ENCODE measurements at regions of chr6 and their contacts with region 1.

Region 1: DNA sequence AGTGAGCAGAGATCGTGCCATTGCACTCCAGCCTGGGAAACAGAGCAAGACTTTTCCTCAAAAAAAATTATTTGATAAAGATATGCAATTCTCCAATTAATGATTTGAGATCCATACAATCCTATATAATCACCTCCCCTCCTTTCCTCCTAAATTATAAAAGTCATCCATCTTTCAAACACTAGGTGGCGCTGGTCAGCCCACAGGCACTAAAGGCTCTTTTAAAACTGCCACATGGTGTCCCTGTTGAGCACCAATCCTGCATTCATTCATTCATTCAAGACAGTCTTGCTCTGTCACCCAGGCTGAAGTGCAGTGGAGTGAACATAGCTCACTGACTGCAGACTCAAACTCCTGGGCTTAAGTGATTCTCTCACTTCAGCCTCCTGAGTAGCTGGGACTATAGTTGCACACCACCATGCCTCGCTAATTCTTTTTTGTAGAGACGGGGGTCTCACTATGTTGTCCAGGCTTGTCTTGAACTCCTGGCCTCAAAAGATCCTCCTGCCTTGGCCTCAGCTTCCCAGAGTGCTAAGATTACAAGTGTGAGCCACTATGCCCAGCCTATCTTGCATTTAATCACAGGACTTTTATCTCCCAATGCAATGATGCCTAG is 58.7 kb upstream of the SLC2A12 start:
- ATAC-seq: peak in 3 of 8 experiments; percentile 43 to 49 (median 46)
- H3K4me3 ChIP-seq: no peak overlapping the region
- H3K27ac ChIP-seq: no peak overlapping the region
- H3K4me1 ChIP-seq: no peaks in the 10 kb centered on the region

Region 2: GRCh38 chr6:133568970-133569889 is 541.9 kb before region 1 on chr6:
- in situ Hi-C with region 1: loop called in 1 of 9 experiments (anchors 25 kb)
- ATAC-seq: peak; percentile 92 to 99 (median 98)
- H3K4me3 ChIP-seq: peak overlapping the region; percentile 27 to 41 (median 33)
- H3K27ac ChIP-seq: no peak overlapping the region
- H3K4me1 ChIP-seq: peaks cover 0 to 2% of the 10 kb centered on the region in 2 donors

Region 3: DNA sequence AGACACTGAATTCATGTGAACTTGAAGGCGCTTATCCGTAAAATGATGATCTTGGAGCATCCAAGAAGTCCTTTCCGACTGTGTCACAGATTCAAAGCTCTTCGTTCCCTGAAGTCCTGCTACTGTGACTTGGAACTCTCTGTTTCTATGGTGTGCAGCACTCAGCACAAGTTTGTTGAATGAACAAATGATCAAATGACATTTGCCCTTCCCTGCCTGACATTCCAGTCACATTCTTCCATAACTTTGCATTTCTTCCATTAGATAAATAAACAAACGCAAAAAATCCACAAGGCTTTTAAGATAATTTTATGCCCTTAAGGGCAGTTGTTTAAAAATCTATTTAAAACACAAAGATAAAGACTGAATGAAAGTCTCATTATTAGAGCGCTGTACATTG is 166.8 kb after region 1 on chr6:
- in situ Hi-C with region 1: no loop called
- ATAC-seq: peak in 2 of 8 experiments; percentile 58 to 73
- H3K4me3 ChIP-seq: no peak overlapping the region
- H3K27ac ChIP-seq: no peak overlapping the region
- H3K4me1 ChIP-seq: no peaks in the 10 kb centered on the region

Measured in motor neuron (in vitro differentiated cells).